HepG2 (cell line): ENCODE measurements at regions of chr1 and their contacts with region 1.

Region 1: GRCh38 chr1:243748706-243749283 is 101.2 kb downstream of the AKT3 start:
- DNase-seq: peak; percentile 49
- ATAC-seq: peak; percentile 92
- H3K4me3 ChIP-seq: no peak overlapping the region
- H3K27ac ChIP-seq: no peak overlapping the region
- H3K4me1 ChIP-seq: no peaks in the 10 kb centered on the region
- H3K27me3 ChIP-seq: no peaks in the 10 kb centered on the region
- CTCF ChIP-seq: peak; percentile 79
- EP300 ChIP-seq: no peak
- POLR2A ChIP-seq: no peak
- RAD21 ChIP-seq: no peak

Region 2: DNA sequence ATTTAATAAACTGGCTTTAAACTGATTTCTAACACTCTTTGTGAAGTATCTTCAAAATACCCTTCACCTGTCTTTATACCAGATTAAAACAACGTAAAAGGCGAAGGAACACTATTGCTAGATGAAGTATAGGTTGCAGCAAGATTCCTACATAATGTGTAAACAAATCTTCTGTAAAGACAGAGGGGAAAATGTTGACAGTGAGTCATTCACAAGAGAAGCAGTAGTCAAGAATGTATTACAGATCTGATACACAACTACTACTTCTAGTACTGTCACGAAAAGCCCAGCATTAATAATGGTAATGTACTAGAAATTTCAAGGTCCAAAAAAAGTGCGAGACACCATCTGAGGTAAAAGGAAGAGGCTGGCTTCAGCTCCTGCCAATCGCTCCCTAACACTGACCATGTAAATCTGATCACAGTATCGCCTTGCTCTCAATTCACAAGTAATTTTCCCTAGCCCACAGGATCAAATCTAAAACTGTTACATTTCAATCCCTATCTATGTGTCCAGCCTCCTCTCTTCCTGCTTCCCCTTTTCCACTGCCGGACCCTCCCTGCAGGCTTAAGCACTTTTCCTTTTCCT is 189.1 kb before region 1 on chr1:
- CTCF ChIA-PET with region 1: no interaction called
- POLR2A ChIA-PET with region 1: no interaction called
- in situ Hi-C with region 1: no loop called
- intact Hi-C with region 1: loop called (anchors 10 kb)
- DNase-seq: no peak
- ATAC-seq: no peak
- H3K4me3 ChIP-seq: no peak overlapping the region
- H3K27ac ChIP-seq: no peak overlapping the region
- H3K4me1 ChIP-seq: no peaks in the 10 kb centered on the region
- H3K27me3 ChIP-seq: no peaks in the 10 kb centered on the region
- CTCF ChIP-seq: no peak
- EP300 ChIP-seq: no peak
- POLR2A ChIP-seq: no peak
- RAD21 ChIP-seq: no peak

Region 3: DNA sequence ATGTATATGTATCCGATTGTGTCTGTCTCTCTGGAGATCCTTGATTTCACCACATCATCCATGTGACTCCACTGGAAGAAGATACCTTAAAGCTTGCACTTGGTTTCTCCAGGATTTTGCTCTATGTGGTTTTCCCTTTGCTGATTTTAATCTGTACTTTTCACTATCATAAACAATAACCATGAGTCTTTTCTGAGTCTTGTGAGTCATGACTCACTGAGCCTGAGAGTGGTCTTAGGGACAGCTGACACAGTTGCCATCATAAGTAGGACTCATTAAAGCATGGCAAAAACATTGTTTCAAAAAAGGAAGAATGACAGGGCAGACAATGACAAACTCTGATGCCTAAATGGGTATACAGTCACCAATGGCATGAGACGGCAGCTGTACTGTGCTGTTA is 125.0 kb before region 1 on chr1:
- CTCF ChIA-PET with region 1: no interaction called
- POLR2A ChIA-PET with region 1: no interaction called
- in situ Hi-C with region 1: no loop called
- intact Hi-C with region 1: no loop called
- DNase-seq: no peak
- ATAC-seq: no peak
- H3K4me3 ChIP-seq: no peak overlapping the region
- H3K27ac ChIP-seq: no peak overlapping the region
- H3K4me1 ChIP-seq: peaks cover 6% of the 10 kb centered on the region; the same call in 1 of the 2 replicates
- H3K27me3 ChIP-seq: no peaks in the 10 kb centered on the region
- CTCF ChIP-seq: no peak
- EP300 ChIP-seq: no peak
- POLR2A ChIP-seq: no peak
- RAD21 ChIP-seq: no peak